ENCODE measurements at regions of chr10 and their contacts with region 1.

Region 1: DNA sequence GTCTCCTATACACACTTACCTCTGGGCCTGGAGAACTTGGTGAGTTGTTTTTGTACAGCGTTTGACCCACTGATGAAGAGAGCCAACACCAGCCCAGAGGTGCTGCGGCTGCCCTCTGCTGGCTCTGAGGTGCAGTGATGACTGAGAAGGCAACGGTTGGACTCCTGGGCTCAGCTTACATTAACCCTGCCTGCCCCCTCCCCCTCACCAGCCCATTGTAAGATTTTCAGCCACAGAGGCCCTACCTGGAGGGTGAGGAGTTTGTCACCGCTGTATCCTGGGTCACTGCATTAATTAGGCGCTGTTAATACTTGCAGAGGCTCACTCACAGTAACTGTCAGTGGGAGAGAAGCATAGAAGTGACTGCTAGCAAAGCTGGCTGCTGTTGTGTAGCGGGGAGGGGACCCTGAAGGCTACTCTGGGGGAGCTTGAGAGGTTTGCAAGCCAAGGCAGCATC is 19.0 kb upstream of the ANKRD2 start:
- DNase-seq: peak; percentile 78
- H3K4me3 Mint-ChIP-seq: no peak overlapping the region
- H3K27ac Mint-ChIP-seq: peak overlapping the region; percentile 46
- H3K4me1 Mint-ChIP-seq: peaks cover 28% of the 10 kb centered on the region
- H3K27me3 Mint-ChIP-seq: no peaks in the 10 kb centered on the region
- CTCF ChIP-seq: peak; percentile 88

Region 2: DNA sequence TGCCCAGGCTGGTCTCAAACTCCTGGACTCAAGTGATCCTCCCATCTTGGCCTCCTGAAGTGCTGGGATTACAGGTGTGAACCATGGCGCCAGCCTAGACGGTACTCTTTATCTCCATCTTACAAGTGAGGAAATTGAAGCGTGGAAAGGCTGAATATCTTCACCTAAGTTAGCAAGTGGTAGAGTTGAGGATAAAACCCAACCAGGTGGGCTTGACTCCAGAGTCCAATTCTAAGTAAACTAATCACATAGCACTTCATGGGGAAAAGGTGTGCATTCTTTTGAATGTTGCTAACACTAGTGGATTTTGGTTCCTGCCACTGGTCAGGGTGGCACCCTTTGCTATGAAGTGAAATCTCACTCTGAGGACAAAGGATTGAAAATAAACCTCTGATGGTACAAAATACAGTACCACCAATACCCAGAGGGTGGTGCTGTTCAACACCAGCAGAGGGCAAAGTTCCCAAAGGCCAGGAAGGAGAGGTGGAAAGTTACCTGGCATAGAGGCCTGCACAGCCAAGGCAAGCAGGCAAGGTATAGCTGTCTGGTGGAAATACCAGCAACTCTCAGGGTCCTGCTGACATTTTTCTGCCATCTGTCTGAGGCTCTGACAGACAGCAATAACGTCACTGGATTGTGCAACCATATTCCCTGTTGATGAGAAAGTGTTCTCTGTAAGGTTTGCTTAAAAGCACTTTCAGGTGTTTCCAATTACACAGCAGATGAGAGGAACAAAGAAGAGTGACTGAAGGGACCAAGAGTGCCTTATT is 90.1 kb before region 1 on chr10:
- CTCF ChIA-PET with region 1: interaction called, 83 read pairs
- POLR2A ChIA-PET with region 1: interaction called, 37 read pairs
- intact Hi-C with region 1: loop called (anchors 1 kb)
- DNase-seq: peak; percentile 74
- H3K4me3 Mint-ChIP-seq: no peak overlapping the region
- H3K27ac Mint-ChIP-seq: peak overlapping the region; percentile 46
- H3K4me1 Mint-ChIP-seq: peaks cover 16% of the 10 kb centered on the region
- H3K27me3 Mint-ChIP-seq: no peaks in the 10 kb centered on the region
- CTCF ChIP-seq: peak; percentile 79

Region 3: DNA sequence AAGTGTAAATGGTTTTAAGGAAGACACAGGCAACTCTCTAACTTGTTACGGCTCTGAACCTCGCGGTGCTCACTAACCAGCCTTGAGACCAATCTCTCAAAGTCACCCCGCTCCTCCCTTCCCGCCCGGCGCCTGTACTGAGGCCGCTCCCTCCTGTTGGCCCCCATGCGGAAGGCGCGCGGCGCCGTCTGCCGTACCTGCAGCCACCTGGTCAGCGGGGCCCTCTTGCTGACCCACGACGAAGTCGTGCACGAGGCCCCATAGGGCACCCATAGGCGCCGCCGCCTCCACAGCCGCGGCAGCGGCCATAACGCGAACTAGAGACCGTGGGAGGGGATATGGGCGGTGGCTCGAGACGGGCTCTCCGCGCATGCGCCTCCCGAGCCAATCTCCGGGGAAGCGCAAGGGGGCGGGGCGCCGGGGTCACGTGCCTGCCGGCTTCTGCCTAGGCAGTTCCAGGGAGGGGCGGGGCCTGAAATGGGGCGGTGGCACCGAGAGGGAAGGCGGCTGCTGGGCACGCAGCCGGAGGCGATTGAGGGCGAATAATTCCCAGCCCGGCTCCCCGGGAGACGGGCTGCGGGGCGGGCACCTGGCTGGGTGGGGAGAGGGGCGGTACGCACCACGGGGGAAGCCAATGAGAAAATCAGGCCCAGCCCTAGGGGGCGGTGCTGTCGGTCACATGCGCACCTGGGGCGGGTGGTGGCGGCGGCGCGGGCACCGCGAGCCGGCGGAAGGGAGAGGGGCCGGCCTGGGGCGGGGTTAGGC is 55.3 kb before region 1 on chr10 and contains the start of gene MMS19:
- CTCF ChIA-PET with region 1: interaction called, 35 read pairs
- POLR2A ChIA-PET with region 1: interaction called, 23 read pairs
- intact Hi-C with region 1: loop called (anchors 1 kb)
- DNase-seq: peak; percentile 98
- H3K4me3 Mint-ChIP-seq: peak within 1 kb of the TSS; percentile 88
- H3K27ac Mint-ChIP-seq: peak within 1 kb of the TSS; percentile 91
- H3K4me1 Mint-ChIP-seq: peaks cover 29% of the 10 kb centered on the region
- H3K27me3 Mint-ChIP-seq: no peaks in the 10 kb centered on the region
- CTCF ChIP-seq: no peak
- total RNA-seq, gene MMS19: 67.0 and 67.2 TPM in 2 replicates

Region 4: DNA sequence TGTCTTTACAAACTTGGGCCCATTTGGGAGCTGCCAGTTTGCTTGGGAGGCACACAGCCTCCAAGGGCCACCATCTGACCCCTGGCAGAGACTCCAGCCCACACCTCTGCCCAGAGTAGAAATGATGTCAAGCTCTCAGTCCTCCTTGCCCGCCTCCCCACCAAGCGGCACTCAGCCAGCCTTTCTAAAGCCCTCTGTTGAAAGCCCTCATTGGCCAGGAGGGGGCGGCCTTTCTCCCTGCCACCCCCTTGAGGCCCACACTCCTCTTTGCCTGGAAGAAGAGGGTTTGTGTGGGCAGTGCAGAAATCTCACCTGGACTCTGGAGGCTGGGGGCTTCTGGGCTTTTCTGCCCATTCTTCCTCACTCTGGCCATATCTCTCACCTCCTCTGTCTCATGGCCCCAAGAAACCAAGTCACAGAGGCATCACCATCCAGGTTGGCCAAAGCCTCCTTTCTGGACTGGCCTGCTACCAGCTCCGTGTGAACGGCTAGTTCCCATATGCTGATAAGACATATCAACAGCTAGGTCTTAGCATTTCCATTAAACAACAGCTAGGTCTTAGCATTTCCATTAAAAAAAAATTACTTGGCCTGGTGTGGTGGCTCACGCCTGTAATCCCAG is 18.7 kb before region 1 on chr10:
- CTCF ChIA-PET with region 1: interaction called, 18 read pairs
- POLR2A ChIA-PET with region 1: interaction called, 4 read pairs
- intact Hi-C with region 1: loop called (anchors 2 kb)
- DNase-seq: peak; percentile 71
- H3K4me3 Mint-ChIP-seq: no peak overlapping the region
- H3K27ac Mint-ChIP-seq: no peak overlapping the region
- H3K4me1 Mint-ChIP-seq: peaks cover 10% of the 10 kb centered on the region
- H3K27me3 Mint-ChIP-seq: no peaks in the 10 kb centered on the region
- CTCF ChIP-seq: peak; percentile 56

Region 5: GRCh38 chr10:97623277-97623676 is 69.7 kb after region 1 on chr10:
- CTCF ChIA-PET with region 1: no interaction called
- POLR2A ChIA-PET with region 1: no interaction called
- intact Hi-C with region 1: no loop called
- DNase-seq: no peak
- H3K4me3 Mint-ChIP-seq: no peak overlapping the region
- H3K27ac Mint-ChIP-seq: no peak overlapping the region
- H3K4me1 Mint-ChIP-seq: no peaks in the 10 kb centered on the region
- H3K27me3 Mint-ChIP-seq: no peaks in the 10 kb centered on the region
- CTCF ChIP-seq: no peak

Measured in MCF 10A (cell line).